Mammary epithelial cell (primary cell): ENCODE measurements at regions of chr6 and their contacts with region 1.

Region 1: DNA sequence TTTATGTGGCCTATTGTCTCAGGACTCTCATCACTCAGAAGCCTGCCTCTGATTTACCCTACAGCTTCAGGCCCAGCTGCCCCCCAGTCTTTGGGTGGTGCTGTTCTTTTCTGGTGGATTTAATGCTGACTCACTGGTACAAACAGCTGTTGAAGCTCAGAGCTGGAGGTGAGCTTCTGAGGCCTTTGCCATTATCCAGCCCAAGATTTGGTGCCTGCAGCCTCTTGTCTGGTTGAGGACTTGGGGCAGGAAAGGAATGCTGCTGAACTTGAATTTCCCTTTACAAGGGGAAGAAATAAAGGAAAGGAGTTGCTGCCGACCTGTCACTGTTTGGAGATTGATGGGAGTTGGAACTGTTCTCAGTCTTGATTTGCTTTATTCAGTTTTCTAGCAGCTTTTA is 19.8 kb downstream of the ABCF1 start:
- DNase-seq: peak; percentile 87
- H3K4me3 ChIP-seq: no peak overlapping the region
- H3K27ac ChIP-seq: peak overlapping the region; percentile 5
- H3K4me1 ChIP-seq: peaks cover 20% of the 10 kb centered on the region
- H3K27me3 ChIP-seq: no peaks in the 10 kb centered on the region
- CTCF ChIP-seq: no peak

Region 2: GRCh38 chr6:30489081-30490025 is 101.6 kb before region 1 on chr6 and contains the start of gene HLA-E:
- CTCF ChIA-PET with region 1: no interaction called
- dilution Hi-C with region 1: loop called (anchors 5 kb)
- in situ Hi-C with region 1: no loop called
- intact Hi-C with region 1: no loop called
- DNase-seq: peak; percentile 99
- H3K4me3 ChIP-seq: peak within 1 kb of the TSS; percentile 92 to 99 (median 93)
- H3K27ac ChIP-seq: peak within 1 kb of the TSS; percentile 93
- H3K4me1 ChIP-seq: peaks cover 12% of the 10 kb centered on the region
- H3K27me3 ChIP-seq: no peaks in the 10 kb centered on the region
- CTCF ChIP-seq: no peak
- total RNA-seq, gene HLA-E: 106 to 145 TPM

Region 3: DNA sequence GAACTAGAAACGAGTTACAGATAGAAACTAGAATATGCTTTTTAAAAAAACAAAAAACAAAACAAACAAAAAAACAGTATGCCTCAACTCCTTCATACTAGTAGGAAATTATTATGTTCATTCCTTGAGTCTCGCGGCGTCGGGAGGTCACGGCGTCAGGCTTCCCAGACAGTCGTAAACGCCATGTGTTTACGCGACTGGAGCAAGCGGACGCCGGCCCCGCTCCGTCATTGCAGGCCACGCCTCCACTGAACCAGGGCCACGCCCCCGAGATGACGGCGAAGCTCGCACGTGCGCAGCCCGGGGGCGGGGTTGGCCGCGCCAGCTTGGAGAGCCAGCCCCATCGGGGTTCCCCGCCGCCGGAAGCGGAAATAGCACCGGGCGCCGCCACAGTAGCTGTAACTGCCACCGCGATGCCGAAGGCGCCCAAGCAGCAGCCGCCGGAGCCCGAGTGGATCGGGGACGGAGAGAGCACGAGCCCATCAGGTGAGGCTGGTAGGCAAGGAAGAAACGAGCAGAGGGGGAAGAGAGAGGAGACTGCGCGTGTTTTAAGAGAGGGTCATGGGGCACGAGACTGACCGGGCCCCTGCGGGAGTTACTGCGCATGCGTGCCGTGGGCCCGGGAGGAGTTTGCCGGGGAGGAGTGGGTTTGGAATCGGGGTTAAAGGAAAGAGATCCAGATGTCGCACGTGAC is 19.8 kb before region 1 on chr6 and contains the start of gene ABCF1:
- CTCF ChIA-PET with region 1: no interaction called
- dilution Hi-C with region 1: no loop called
- in situ Hi-C with region 1: no loop called
- intact Hi-C with region 1: loop called (anchors 2 kb)
- DNase-seq: peak; percentile 97
- H3K4me3 ChIP-seq: peak within 1 kb of the TSS; percentile 70 to 99 (median 81)
- H3K27ac ChIP-seq: peak within 1 kb of the TSS; percentile 85
- H3K4me1 ChIP-seq: peaks cover 17% of the 10 kb centered on the region
- H3K27me3 ChIP-seq: no peaks in the 10 kb centered on the region
- CTCF ChIP-seq: no peak
- total RNA-seq, gene ABCF1: 31.8 to 59.8 TPM

Region 4: DNA sequence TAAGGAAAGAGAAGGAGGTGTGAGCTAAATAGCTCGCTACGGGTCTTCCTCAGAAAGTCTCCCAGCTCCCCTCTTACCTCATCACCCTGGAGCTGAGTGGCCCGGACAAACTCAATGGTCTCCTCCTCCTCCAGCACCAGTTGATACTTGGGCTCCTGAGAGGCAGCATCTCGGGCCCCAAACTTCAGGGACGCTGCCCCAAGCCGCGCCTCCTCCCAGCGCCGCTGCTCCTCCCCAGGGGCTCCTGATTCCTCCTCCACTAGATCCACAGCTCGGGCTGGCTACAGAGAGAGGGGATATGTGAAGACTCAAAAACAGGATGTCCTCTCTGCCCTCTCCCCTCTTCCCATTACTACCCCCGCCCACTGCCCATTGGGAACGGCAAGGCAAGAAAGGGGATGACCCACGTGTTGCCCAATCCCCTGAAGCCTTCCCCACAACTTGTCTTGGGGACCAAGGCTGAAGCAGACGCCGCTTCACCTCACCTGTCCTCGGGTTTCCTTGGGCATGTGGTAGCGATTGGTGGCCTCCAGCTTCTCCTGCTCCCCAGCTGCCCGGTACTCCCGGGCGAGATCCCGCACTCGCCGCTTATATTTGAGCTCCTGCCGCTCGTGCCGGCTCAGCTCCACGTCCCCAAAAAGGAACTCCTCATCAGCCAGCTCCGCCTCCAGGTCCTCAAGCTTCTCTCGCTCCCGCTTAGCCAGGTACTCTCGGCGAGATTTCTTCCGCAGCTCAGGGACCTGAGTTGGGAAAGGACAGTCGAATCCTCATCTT is 74.2 kb after region 1 on chr6:
- CTCF ChIA-PET with region 1: no interaction called
- dilution Hi-C with region 1: loop called (anchors 10 kb)
- in situ Hi-C with region 1: no loop called
- intact Hi-C with region 1: no loop called
- DNase-seq: no peak
- H3K4me3 ChIP-seq: no peak overlapping the region
- H3K27ac ChIP-seq: no peak overlapping the region
- H3K4me1 ChIP-seq: no peaks in the 10 kb centered on the region
- H3K27me3 ChIP-seq: no peaks in the 10 kb centered on the region
- CTCF ChIP-seq: no peak

Region 5: GRCh38 chr6:30730601-30731435 is 139.8 kb after region 1 on chr6:
- CTCF ChIA-PET with region 1: no interaction called
- dilution Hi-C with region 1: loop called (anchors 5 kb)
- in situ Hi-C with region 1: no loop called
- intact Hi-C with region 1: no loop called
- DNase-seq: peak; percentile 88
- H3K4me3 ChIP-seq: no peak overlapping the region
- H3K27ac ChIP-seq: no peak overlapping the region
- H3K4me1 ChIP-seq: peaks cover 5% of the 10 kb centered on the region
- H3K27me3 ChIP-seq: no peaks in the 10 kb centered on the region
- CTCF ChIP-seq: peak; percentile 81 to 95

Region 6: DNA sequence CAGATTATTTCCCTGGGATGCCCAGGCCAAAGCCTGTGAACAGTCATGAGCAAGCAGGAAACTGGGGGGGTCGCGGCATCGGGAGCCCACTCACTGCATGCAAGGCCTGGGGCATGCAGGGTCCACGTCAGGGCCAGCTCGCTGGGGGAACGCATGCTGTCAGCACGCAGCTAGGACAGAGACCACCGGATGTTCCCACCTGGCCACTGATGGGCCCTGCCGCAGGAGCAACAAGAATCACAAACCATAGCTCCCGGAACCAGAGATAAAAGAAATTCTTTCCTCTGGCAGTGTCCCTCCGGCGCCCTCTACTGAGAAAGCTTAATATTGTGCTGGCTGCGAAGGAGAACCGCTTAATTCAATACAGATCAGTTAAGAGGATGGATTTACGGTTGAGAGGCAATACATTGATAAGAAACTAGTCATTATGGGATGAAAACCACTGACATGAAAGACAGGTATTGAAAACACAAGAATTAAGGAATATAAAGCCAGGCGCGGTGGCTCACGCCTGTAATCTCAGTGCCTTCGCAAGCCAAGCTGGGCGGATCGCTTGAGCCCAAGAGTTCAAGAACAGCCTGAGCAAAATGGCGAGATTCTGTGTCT is 488.8 kb after region 1 on chr6:
- CTCF ChIA-PET with region 1: no interaction called
- dilution Hi-C with region 1: loop called (anchors 10 kb)
- in situ Hi-C with region 1: no loop called
- intact Hi-C with region 1: no loop called
- DNase-seq: peak; percentile 49
- H3K4me3 ChIP-seq: peak overlapping the region in 1 of 3 experiments; percentile 27
- H3K27ac ChIP-seq: no peak overlapping the region
- H3K4me1 ChIP-seq: peaks cover 8% of the 10 kb centered on the region
- H3K27me3 ChIP-seq: no peaks in the 10 kb centered on the region
- CTCF ChIP-seq: peak; percentile 72 to 83